ENCODE measurements at regions of chr11 and their contacts with region 1.

Region 1: DNA sequence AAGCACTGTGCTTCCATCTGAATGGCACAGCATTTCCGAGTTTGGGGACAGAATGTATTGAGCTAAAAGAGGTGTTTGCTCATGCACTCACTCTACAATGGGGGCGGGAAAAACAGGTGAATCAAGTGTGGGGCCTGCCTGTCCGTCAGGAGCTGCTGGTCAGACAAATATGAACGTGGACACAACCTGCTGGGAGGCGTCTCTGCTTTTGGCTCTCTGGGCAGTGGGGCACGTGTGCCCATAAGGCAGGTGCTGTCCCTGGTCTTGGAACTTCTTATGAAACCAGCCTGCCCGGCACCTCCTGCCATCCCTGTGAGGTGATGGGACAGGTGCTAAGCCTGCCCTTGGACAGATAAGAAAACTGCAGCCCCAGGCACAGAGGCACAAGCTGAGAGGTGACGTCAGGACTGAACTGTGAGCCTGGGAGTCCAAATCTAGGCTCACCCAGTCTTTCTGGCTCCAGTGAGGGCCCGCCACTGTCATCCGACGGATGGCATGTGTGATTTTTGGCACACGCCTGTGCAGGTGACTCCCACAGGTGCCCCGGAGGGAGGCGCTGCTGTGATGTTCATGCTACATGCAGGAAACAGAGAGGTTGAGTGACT is 51.5 kb downstream of the SMIM38 start:
- DNase-seq: no peak
- H3K4me3 ChIP-seq: no peak overlapping the region
- H3K27ac ChIP-seq: no peak overlapping the region
- H3K4me1 ChIP-seq: no peaks in the 10 kb centered on the region
- H3K27me3 ChIP-seq: no peaks in the 10 kb centered on the region
- CTCF ChIP-seq: no peak
- EP300 ChIP-seq: no peak
- POLR2A ChIP-seq: no peak

Region 2: GRCh38 chr11:69190796-69191536 is 16.3 kb before region 1 on chr11:
- in situ Hi-C with region 1: no loop called
- intact Hi-C with region 1: loop called (anchors 1 kb)
- DNase-seq: no peak
- H3K4me3 ChIP-seq: no peak overlapping the region
- H3K27ac ChIP-seq: no peak overlapping the region
- H3K4me1 ChIP-seq: no peaks in the 10 kb centered on the region
- H3K27me3 ChIP-seq: no peaks in the 10 kb centered on the region
- CTCF ChIP-seq: no peak
- EP300 ChIP-seq: no peak
- POLR2A ChIP-seq: no peak

Region 3: DNA sequence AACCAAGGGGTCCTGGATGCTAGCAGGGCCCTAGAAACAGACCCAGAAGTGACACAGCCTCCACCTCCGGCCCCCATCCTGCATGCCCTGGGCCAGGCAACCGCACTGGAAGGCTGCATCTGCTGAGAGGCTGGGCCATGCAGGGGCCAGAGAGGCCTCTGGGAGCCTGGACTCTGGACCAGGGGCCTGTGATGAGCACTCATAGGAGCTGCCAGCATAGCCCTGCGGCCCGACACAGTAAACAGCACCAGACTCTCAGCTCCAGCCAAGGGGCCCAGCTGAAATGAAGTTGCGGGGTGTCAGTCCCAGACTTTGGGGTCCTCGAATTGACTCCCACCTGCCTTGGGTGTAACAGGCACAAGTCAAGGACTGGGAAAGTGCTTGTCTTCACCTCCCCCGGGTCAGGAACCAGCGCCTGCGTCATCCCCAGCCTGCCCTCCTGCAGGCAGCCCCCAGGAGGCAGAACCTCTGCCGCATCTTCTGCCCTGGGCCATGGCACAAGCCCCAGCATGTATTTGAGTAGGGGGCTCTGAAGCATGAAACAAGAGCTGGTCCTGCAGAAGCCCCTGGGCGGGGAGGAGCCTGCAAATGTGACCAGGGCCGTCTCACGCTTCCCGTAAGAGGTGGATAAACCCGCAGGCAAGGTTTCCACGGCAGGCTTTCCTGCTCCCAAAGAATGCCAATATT is 408.4 kb after region 1 on chr11:
- in situ Hi-C with region 1: no loop called
- intact Hi-C with region 1: no loop called
- DNase-seq: no peak
- H3K4me3 ChIP-seq: no peak overlapping the region
- H3K27ac ChIP-seq: no peak overlapping the region
- H3K4me1 ChIP-seq: no peaks in the 10 kb centered on the region
- H3K27me3 ChIP-seq: no peaks in the 10 kb centered on the region
- CTCF ChIP-seq: no peak
- EP300 ChIP-seq: no peak
- POLR2A ChIP-seq: no peak

Measured in transverse colon (tissue), 4 donors.